MCF 10A (cell line): ENCODE measurements at regions of chr12 and their contacts with region 1.

Region 1: GRCh38 chr12:26434299-26435068 is 239.1 kb downstream of the SSPN start:
- DNase-seq: peak; percentile 72
- H3K4me3 Mint-ChIP-seq: no peak overlapping the region
- H3K27ac Mint-ChIP-seq: no peak overlapping the region
- H3K4me1 Mint-ChIP-seq: no peaks in the 10 kb centered on the region
- H3K27me3 Mint-ChIP-seq: no peaks in the 10 kb centered on the region
- CTCF ChIP-seq: peak; percentile 80

Region 2: GRCh38 chr12:26523708-26524150 is 89.2 kb after region 1 on chr12:
- CTCF ChIA-PET with region 1: interaction called, 4 read pairs
- POLR2A ChIA-PET with region 1: no interaction called
- intact Hi-C with region 1: loop called (anchors 2 kb)
- DNase-seq: peak; percentile 98
- H3K4me3 Mint-ChIP-seq: peak overlapping the region; percentile 11
- H3K27ac Mint-ChIP-seq: no peak overlapping the region
- H3K4me1 Mint-ChIP-seq: peaks cover 12% of the 10 kb centered on the region
- H3K27me3 Mint-ChIP-seq: no peaks in the 10 kb centered on the region
- CTCF ChIP-seq: no peak

Region 3: GRCh38 chr12:26614020-26614616 is 179.6 kb after region 1 on chr12:
- CTCF ChIA-PET with region 1: interaction called, 8 read pairs
- POLR2A ChIA-PET with region 1: no interaction called
- intact Hi-C with region 1: loop called (anchors 1 kb)
- DNase-seq: peak; percentile 51
- H3K4me3 Mint-ChIP-seq: no peak overlapping the region
- H3K27ac Mint-ChIP-seq: no peak overlapping the region
- H3K4me1 Mint-ChIP-seq: no peaks in the 10 kb centered on the region
- H3K27me3 Mint-ChIP-seq: no peaks in the 10 kb centered on the region
- CTCF ChIP-seq: peak; percentile 73

Region 4: GRCh38 chr12:26651566-26652188 is 217.2 kb after region 1 on chr12:
- CTCF ChIA-PET with region 1: interaction called, 6 read pairs
- POLR2A ChIA-PET with region 1: no interaction called
- intact Hi-C with region 1: loop called (anchors 1 kb)
- DNase-seq: peak; percentile 75
- H3K4me3 Mint-ChIP-seq: no peak overlapping the region
- H3K27ac Mint-ChIP-seq: no peak overlapping the region
- H3K4me1 Mint-ChIP-seq: peaks cover 16% of the 10 kb centered on the region
- H3K27me3 Mint-ChIP-seq: no peaks in the 10 kb centered on the region
- CTCF ChIP-seq: peak; percentile 89

Region 5: GRCh38 chr12:26701604-26702215 is 267.2 kb after region 1 on chr12:
- CTCF ChIA-PET with region 1: interaction called, 8 read pairs
- POLR2A ChIA-PET with region 1: no interaction called
- intact Hi-C with region 1: loop called (anchors 1 kb)
- DNase-seq: peak; percentile 65
- H3K4me3 Mint-ChIP-seq: no peak overlapping the region
- H3K27ac Mint-ChIP-seq: no peak overlapping the region
- H3K4me1 Mint-ChIP-seq: peaks cover 13% of the 10 kb centered on the region
- H3K27me3 Mint-ChIP-seq: no peaks in the 10 kb centered on the region
- CTCF ChIP-seq: peak; percentile 66